Activated CD4-positive, alpha-beta memory T cell treated with anti-CD3 and anti-CD28 coated beads, Interleukin-2, amount 10 ng/mL, durations not matched to agents 7 days and 5 days (primary cell): ENCODE measurements at regions of chr14 and their contacts with region 1.

Region 1: GRCh38 chr14:100192672-100193416 is 33.4 kb upstream of the DEGS2 start:
- DNase-seq: peak; percentile 100
- H3K4me3 Mint-ChIP-seq: peak overlapping the region; percentile 27
- H3K27ac Mint-ChIP-seq: peak overlapping the region; percentile 73
- H3K4me1 Mint-ChIP-seq: peaks cover 16% of the 10 kb centered on the region
- H3K27me3 Mint-ChIP-seq: no peaks in the 10 kb centered on the region

Region 2: DNA sequence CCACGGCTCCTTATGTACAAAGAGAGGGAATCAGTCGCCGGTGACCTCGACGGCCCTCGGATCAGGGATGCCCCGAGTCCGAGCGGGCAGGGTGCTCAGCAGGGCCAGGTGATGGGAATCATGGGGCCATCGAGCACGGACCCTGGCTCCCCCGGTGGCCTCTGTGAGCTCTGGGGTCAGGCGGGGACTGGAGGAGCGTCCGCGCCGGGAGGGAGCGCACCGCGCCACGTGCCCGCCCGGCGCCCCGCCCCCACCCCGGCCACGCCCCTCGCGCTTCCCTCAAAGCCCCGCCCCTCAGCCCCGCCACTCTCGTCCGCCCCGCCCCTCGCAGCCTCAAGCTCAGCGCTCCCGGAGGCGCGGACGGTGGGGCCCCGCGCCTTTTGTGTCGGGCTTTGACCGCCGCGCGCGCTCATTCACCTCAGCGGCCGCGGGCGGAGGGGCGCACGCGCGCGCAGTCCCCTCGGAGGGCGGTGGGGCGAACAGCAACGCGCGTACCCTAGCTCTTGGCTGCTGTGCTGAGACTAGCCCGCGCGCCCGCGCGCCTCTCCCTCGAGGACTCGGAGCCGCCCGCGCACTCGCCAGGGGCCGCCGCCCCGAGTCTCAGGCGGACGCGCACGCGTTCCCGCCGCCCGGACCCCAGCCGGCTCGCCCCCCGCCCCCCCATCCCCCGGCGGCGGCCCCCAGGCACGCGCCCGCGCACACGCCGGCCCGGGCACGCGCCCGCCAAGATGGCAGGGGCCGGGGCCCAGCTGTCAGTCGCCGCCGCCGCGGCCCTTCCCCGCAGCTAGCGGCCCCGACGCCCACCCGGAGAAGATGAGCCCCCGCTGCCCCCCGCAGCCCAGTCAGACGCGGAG is 221.5 kb before region 1 on chr14:
- CTCF ChIA-PET with region 1: interaction called, 8 read pairs
- POLR2A ChIA-PET with region 1: interaction called, 11 read pairs
- DNase-seq: peak; percentile 82
- H3K4me3 Mint-ChIP-seq: peak overlapping the region; percentile 58
- H3K27ac Mint-ChIP-seq: no peak overlapping the region
- H3K4me1 Mint-ChIP-seq: peaks cover 20% of the 10 kb centered on the region
- H3K27me3 Mint-ChIP-seq: peaks cover 29% of the 10 kb centered on the region

Region 3: DNA sequence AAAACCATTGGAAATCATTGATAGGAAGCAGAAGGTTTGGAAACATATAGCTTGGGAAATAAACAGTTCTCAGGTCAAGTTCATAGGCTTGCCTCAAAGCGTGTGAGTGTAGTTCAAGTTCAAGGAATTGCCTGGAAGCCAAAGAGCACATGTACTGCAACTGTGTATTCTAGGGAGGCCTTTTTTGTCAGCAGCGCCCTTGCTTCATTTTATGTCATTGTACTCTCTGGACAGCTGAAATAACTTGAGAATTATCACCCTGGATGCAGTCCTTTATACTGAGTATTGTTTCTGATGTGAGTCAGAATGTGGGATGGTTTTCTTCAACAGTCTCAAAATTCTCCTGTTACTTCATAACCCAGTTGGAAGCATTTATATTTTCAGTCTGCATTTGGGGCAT is 143.6 kb before region 1 on chr14:
- CTCF ChIA-PET with region 1: interaction called, 12 read pairs
- POLR2A ChIA-PET with region 1: no interaction called
- DNase-seq: no peak
- H3K4me3 Mint-ChIP-seq: no peak overlapping the region
- H3K27ac Mint-ChIP-seq: no peak overlapping the region
- H3K4me1 Mint-ChIP-seq: peaks cover 17% of the 10 kb centered on the region
- H3K27me3 Mint-ChIP-seq: no peaks in the 10 kb centered on the region

Region 4: DNA sequence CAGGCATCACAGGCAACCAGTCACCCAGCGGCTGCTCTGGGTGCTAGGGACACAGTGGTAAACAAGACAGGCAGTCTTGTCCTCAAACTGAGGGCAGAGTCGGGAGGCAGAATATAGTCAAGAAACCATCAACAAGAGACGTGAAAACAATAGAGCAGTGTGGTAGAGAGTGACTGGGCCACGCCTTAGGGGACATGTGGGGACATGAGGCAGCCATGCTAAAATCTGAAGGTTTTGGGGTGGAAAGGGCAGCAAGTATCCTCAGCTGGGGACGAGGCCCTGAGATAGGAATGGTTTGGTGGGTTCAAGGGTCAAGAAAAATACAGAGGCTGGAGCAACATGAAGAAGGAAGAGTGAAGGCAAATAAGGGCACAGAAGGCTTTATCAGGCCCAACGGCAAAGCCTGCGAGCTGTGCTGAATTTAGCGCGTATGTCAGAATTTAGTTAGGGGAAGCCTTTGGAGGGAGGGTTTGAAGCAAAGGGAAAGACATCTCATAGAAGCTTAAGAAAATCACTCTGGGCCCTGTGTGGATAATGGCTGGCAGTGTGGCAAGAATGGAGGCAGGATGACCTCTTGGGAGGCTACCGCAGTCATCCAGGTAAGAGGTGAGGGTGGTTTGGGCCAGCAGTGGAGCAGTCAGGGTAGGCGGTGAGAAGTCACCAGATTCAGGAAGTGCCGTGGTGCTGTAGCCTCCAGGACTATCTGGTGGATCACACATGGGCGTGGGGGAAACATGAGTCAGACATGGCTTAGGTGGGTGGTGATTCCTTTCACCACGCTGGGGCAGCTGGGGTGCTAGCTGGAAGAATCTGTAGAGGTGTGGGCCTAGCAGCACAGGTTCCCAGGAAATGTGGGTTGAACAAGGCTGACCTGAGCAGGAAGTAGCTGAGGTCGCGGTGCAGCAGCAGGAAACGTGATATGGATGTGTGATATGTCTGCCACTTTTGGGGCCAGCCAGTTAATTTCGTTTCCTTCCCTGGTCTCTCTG is 124.6 kb before region 1 on chr14:
- CTCF ChIA-PET with region 1: interaction called, 42 read pairs
- POLR2A ChIA-PET with region 1: interaction called, 4 read pairs
- DNase-seq: peak; percentile 93
- H3K4me3 Mint-ChIP-seq: peak overlapping the region; percentile 86
- H3K27ac Mint-ChIP-seq: peak overlapping the region; percentile 97
- H3K4me1 Mint-ChIP-seq: peaks cover 49% of the 10 kb centered on the region
- H3K27me3 Mint-ChIP-seq: no peaks in the 10 kb centered on the region

Region 5: DNA sequence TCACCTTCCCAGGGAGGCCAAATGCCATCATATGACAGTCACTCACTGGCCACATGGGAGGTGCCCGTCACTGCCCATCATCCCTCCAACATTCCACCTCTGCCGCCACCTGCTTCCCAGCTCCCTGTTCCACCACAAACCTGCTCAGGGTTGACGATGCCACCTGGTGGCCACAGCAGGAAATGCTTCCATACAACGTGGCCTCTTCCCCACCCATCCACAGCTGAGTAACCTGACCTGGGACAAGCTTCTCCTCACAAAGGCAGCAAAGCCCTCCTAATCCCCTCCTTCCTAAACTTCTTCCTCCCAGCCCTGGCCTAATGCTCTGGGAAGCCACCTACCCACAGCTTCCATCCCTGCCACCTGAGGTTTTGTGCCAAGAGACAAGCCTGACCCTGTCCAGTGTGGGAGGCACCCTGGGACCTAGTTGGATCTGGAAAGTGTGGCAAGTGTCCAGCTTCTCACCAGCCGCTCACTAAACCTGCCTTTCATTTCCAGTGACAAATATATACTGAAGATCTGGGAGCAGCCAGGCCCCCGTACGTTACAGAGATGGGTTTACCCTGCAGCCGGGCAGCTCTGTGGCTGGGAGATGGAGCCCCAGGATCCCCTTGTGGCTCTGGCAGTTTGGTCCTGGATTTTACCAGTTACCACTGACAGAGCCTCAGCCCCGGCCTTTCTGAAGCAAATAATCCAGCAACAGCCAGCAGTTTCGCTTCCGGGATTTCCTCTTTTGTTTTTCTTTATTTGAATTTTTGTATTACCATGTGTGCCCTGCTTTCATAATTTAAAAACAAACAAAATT is 37.6 kb before region 1 on chr14:
- CTCF ChIA-PET with region 1: interaction called, 20 read pairs
- POLR2A ChIA-PET with region 1: no interaction called
- DNase-seq: peak; percentile 44
- H3K4me3 Mint-ChIP-seq: no peak overlapping the region
- H3K27ac Mint-ChIP-seq: no peak overlapping the region
- H3K4me1 Mint-ChIP-seq: peaks cover 3% of the 10 kb centered on the region
- H3K27me3 Mint-ChIP-seq: peaks cover 22% of the 10 kb centered on the region

Region 6: DNA sequence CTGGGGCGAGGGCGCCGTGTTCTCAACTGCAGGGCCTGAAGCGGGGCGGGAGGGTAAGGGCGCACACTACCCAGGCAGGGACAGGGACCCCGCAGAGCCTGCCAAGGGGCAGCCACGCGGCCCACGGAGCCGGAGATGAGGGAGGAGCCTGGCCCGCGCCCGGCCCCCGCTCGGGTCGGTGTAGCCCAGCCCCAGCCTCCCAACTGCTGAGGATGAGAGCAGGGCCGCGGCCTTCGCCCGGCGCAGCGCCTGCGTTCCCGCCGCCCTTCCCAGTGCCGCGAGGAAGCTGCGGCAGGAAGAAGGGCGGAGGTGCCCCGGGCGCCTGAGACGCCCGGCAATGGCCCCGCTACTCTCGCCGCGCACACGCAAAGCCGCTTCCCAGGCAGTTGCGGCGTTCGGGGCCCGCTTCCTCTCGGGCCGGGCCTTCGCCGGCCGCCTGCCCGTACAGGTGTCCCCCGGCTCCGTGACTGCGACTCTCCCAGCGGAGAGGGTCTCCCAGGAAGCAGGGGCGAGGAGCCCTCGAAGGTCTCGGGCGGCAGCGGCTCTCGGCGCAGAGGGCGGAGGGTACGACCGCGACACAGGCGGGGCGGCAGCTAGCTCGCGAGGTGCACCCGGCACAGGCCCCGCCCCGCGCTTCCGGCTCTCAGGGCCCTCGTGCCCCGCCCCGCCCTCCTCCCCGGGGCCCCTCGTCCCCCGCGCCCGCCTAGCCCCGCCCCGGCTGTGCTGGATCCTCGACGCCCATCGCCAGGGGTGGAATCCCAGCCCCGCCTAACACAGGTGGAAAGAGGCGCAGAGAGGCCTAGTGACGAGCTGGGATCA is 21.3 kb after region 1 on chr14:
- CTCF ChIA-PET with region 1: interaction called, 100 read pairs
- POLR2A ChIA-PET with region 1: interaction called, 19 read pairs
- DNase-seq: peak; percentile 93
- H3K4me3 Mint-ChIP-seq: peak overlapping the region; percentile 65
- H3K27ac Mint-ChIP-seq: peak overlapping the region; percentile 78
- H3K4me1 Mint-ChIP-seq: peaks cover 23% of the 10 kb centered on the region
- H3K27me3 Mint-ChIP-seq: no peaks in the 10 kb centered on the region

Region 7: GRCh38 chr14:100239840-100240724 is 47.2 kb after region 1 on chr14:
- CTCF ChIA-PET with region 1: interaction called, 23 read pairs
- POLR2A ChIA-PET with region 1: interaction called, 9 read pairs
- DNase-seq: peak; percentile 89
- H3K4me3 Mint-ChIP-seq: peak overlapping the region; percentile 89
- H3K27ac Mint-ChIP-seq: peak overlapping the region; percentile 89
- H3K4me1 Mint-ChIP-seq: peaks cover 52% of the 10 kb centered on the region
- H3K27me3 Mint-ChIP-seq: no peaks in the 10 kb centered on the region